Activated B cell treated with CpG ODN at 0.5 μM for 24 hours (primary cell): ENCODE measurements at regions of chr2 and their contacts with region 1.

Region 1: GRCh38 chr2:203238704-203239526 is at the start of gene CYP20A1:
- DNase-seq: peak; percentile 98
- ATAC-seq: peak; percentile 85
- H3K4me3 Mint-ChIP-seq: peak within 1 kb of the TSS; percentile 96
- H3K27ac Mint-ChIP-seq: peak within 1 kb of the TSS; percentile 95
- H3K4me1 Mint-ChIP-seq: peaks cover 32% of the 10 kb centered on the region
- H3K27me3 Mint-ChIP-seq: no peaks in the 10 kb centered on the region
- CTCF ChIP-seq: no peak
- total RNA-seq, gene CYP20A1: 24.0 and 32.2 TPM in 2 replicates

Region 2: DNA sequence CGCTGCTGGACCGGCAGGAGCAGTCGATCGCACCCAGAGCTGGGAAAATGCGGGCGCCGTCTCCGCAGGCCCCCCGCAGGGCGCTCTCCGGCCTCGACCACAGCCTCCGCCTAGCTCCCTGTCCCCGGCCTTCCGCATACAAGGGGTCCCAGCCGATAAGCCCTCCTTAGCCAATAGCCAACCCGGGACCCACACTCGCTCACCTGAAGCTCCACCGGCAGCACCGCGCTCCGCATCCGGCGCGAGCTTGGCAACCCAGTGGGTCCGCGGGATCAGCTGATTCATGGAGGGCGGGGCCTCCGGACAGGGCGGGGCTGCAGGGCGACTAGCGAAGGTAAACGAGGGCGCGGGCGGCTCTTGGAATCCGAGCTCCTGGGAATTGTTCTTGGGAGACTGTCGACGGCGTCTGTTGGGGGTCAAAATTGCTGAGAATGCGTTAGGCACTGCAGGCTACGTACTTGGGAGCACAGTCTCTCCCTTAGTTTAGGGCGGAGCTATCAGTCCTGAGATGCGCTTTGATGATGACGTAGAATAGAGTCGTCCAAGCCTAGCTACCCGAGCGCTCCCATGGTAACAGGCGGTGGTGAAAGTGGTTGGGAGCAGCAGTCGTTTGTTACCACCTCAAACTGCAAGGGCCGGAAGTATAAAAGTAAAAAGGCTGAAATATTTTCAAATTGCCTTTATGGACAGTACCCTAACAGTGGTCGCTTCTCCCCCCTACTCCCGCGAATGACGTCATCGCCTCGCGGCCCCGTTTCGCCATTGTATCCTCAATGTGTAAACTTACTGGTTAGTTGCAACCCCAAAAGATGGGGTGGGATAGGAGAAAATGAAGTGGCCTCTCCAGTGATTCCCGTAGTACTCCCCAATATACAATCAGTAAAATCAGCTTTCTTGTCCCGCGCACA is 1458.0 kb before region 1 on chr2 and contains the start of gene ALS2:
- CTCF ChIA-PET with region 1: no interaction called
- POLR2A ChIA-PET with region 1: interaction called, 4 read pairs
- intact Hi-C with region 1: loop called (anchors 2 kb)
- DNase-seq: peak; percentile 95
- ATAC-seq: peak; percentile 90
- H3K4me3 Mint-ChIP-seq: peak within 1 kb of the TSS; percentile 96
- H3K27ac Mint-ChIP-seq: peak within 1 kb of the TSS; percentile 95
- H3K4me1 Mint-ChIP-seq: peaks cover 17% of the 10 kb centered on the region
- H3K27me3 Mint-ChIP-seq: peaks cover 8% of the 10 kb centered on the region
- CTCF ChIP-seq: no peak
- total RNA-seq, gene ALS2: 11.6 and 14.2 TPM in 2 replicates

Region 3: GRCh38 chr2:202238234-202239197 is 1000.4 kb before region 1 on chr2 and contains the start of gene SUMO1:
- CTCF ChIA-PET with region 1: no interaction called
- POLR2A ChIA-PET with region 1: no interaction called
- intact Hi-C with region 1: loop called (anchors 10 kb)
- DNase-seq: peak; percentile 86
- ATAC-seq: peak; percentile 94
- H3K4me3 Mint-ChIP-seq: peak within 1 kb of the TSS; percentile 100
- H3K27ac Mint-ChIP-seq: peak within 1 kb of the TSS; percentile 93
- H3K4me1 Mint-ChIP-seq: peaks cover 36% of the 10 kb centered on the region
- H3K27me3 Mint-ChIP-seq: no peaks in the 10 kb centered on the region
- CTCF ChIP-seq: no peak
- total RNA-seq, gene SUMO1: 78.8 and 83.9 TPM in 2 replicates

Region 4: GRCh38 chr2:202577250-202578183 is 661.4 kb before region 1 on chr2:
- CTCF ChIA-PET with region 1: no interaction called
- POLR2A ChIA-PET with region 1: interaction called, 6 read pairs
- intact Hi-C with region 1: loop called (anchors 10 kb)
- DNase-seq: no peak
- ATAC-seq: no peak
- H3K4me3 Mint-ChIP-seq: no peak overlapping the region
- H3K27ac Mint-ChIP-seq: no peak overlapping the region
- H3K4me1 Mint-ChIP-seq: no peaks in the 10 kb centered on the region
- H3K27me3 Mint-ChIP-seq: no peaks in the 10 kb centered on the region
- CTCF ChIP-seq: no peak

Region 5: GRCh38 chr2:202831242-202832220 is 407.4 kb before region 1 on chr2:
- CTCF ChIA-PET with region 1: no interaction called
- POLR2A ChIA-PET with region 1: no interaction called
- intact Hi-C with region 1: no loop called
- DNase-seq: no peak
- ATAC-seq: peak; percentile 58
- H3K4me3 Mint-ChIP-seq: no peak overlapping the region
- H3K27ac Mint-ChIP-seq: no peak overlapping the region
- H3K4me1 Mint-ChIP-seq: peaks cover 9% of the 10 kb centered on the region
- H3K27me3 Mint-ChIP-seq: no peaks in the 10 kb centered on the region
- CTCF ChIP-seq: no peak

Region 6: DNA sequence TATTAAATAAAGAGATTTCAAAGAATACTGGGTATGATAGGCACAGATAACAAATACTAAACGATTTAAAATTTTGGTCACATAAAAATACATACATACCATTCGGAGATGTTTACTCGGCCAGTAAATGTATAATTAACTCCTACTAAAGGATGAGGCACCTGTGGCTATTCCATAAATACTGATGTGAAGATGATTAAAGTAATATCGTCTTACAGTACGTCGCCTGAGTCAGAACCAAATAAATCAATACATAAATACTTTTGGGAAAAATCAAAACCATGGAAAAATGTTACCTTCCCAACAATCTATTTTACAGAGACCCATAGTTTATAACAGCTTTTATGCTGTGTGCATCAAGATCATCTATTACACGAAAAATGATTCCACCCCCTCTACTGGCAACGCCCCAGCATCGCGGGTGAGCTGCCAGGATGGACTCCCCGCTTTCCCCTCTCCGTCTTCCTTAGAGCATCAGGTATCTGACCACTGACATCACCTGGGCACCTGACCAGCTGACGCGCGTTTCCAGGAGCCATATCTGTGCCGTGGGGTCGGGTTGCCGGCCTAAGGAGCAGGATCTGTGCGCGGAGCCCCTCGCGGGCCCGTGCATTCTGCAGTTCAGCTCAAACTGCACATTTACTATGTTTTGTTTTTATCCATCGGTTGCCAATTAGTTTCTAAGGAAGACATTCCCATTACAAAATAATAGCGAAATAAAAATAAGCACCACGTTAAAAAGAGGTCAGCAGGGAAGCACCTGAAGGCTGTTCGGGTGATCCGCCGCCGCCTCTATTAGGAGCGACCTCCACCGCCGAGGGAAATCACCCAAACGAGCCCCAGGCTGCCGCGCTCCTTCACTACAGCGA is 368.2 kb before region 1 on chr2:
- CTCF ChIA-PET with region 1: no interaction called
- POLR2A ChIA-PET with region 1: interaction called, 5 read pairs
- intact Hi-C with region 1: loop called (anchors 2 kb)
- DNase-seq: peak; percentile 53
- ATAC-seq: peak; percentile 81
- H3K4me3 Mint-ChIP-seq: peak overlapping the region; percentile 92
- H3K27ac Mint-ChIP-seq: peak overlapping the region; percentile 81
- H3K4me1 Mint-ChIP-seq: peaks cover 5% of the 10 kb centered on the region
- H3K27me3 Mint-ChIP-seq: no peaks in the 10 kb centered on the region
- CTCF ChIP-seq: peak; percentile 12

Region 7: DNA sequence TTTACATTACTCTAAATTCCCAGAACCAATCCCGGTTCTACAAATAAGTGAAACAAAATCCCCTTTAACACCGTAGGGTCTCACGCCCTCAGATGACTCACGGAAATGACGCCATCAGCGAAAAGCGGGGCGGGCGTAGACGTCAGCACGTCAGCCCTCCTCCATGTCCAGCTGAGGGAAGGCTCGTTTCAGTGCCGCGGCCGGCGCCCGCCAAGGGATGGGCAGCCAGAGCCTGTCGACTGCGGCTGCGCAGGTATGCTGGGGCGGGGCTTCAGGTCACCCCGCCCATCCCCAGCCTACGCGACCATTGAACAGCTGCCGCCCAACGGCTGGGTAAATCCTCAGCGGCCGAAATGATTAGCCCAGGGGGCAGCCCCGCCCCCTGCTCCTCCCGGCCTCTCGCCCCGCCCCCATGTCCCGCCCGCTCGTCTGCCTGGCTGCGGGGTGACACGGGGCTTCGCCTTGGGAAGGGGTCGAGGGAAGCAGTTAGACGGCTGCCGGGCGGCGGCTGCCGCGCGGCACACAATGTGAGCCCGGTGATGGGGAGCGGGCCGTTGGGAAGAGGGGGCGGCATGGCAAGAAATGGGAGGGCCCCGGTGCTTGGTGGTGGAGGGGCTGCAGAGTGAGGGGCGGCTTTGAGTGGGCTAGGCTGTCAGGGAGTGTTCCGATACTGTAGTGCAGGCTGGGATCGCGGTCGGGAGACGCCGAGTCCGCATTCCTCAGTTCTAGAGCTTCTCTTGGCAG is 224.3 kb before region 1 on chr2 and contains the start of gene NBEAL1:
- CTCF ChIA-PET with region 1: no interaction called
- POLR2A ChIA-PET with region 1: interaction called, 10 read pairs
- intact Hi-C with region 1: loop called (anchors 1 kb)
- DNase-seq: peak; percentile 100
- ATAC-seq: peak; percentile 93
- H3K4me3 Mint-ChIP-seq: peak within 1 kb of the TSS; percentile 87
- H3K27ac Mint-ChIP-seq: peak within 1 kb of the TSS; percentile 84
- H3K4me1 Mint-ChIP-seq: peaks cover 26% of the 10 kb centered on the region
- H3K27me3 Mint-ChIP-seq: no peaks in the 10 kb centered on the region
- CTCF ChIP-seq: no peak
- total RNA-seq, gene NBEAL1: 8.9 and 9.3 TPM in 2 replicates

Region 8: DNA sequence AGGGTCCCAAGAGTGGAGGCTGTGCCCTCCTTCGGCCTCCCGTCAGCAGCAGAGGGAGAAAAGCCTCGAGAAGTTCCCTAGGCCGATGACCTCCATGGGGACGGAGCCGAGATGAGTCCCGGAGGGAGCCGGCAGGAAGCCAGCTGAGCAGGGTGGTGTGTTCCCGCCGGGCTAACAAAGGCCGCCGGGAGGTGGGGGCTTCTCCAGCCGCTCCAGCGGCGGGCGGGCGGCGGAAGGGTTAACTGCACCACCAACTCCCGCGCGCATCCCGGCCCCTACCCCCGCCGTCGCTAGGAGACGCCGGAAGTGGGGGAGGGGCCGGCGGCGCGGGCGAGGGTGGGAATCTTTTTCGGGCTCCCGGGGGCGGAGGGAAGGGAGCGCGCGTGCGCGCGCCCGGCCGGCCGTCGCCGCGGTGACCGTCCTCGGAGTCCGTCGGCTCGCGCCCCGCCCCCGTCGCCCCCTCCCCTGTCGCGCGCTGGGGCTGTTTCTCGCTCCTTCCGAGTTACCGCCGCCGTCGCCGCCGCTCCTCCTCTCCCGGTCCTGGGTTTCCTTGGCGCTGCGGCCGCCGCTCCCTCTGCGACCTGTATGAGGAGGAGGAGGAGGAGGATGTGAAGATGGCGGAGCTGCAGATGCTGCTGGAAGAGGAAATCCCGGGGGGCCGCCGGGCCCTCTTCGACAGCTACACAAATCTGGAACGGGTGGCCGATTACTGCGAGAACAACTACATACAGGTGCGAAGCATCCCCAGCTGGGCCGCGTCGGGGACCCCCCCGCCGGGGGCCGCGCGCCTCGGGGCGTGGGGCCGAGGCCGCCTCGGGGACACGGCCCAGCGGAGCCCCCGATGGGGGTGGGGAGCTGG is 89.2 kb after region 1 on chr2 and contains the start of gene ABI2:
- CTCF ChIA-PET with region 1: no interaction called
- POLR2A ChIA-PET with region 1: interaction called, 10 read pairs
- intact Hi-C with region 1: loop called (anchors 1 kb)
- DNase-seq: peak; percentile 65
- ATAC-seq: peak; percentile 67
- H3K4me3 Mint-ChIP-seq: peak within 1 kb of the TSS; percentile 90
- H3K27ac Mint-ChIP-seq: peak within 1 kb of the TSS; percentile 76
- H3K4me1 Mint-ChIP-seq: peaks cover 15% of the 10 kb centered on the region
- H3K27me3 Mint-ChIP-seq: no peaks in the 10 kb centered on the region
- CTCF ChIP-seq: no peak
- total RNA-seq, gene ABI2: 13.8 and 17.3 TPM in 2 replicates